ENCODE measurements at regions of chr2 and their contacts with region 1.

Region 1: GRCh38 chr2:241173570-241173969 is 14.9 kb upstream of the ANO7 start:
- DNase-seq: no peak
- H3K4me3 ChIP-seq: no peak overlapping the region
- H3K27ac ChIP-seq: no peak overlapping the region
- H3K4me1 ChIP-seq: no peaks in the 10 kb centered on the region
- H3K27me3 ChIP-seq: no peaks in the 10 kb centered on the region
- CTCF ChIP-seq: no peak

Region 2: DNA sequence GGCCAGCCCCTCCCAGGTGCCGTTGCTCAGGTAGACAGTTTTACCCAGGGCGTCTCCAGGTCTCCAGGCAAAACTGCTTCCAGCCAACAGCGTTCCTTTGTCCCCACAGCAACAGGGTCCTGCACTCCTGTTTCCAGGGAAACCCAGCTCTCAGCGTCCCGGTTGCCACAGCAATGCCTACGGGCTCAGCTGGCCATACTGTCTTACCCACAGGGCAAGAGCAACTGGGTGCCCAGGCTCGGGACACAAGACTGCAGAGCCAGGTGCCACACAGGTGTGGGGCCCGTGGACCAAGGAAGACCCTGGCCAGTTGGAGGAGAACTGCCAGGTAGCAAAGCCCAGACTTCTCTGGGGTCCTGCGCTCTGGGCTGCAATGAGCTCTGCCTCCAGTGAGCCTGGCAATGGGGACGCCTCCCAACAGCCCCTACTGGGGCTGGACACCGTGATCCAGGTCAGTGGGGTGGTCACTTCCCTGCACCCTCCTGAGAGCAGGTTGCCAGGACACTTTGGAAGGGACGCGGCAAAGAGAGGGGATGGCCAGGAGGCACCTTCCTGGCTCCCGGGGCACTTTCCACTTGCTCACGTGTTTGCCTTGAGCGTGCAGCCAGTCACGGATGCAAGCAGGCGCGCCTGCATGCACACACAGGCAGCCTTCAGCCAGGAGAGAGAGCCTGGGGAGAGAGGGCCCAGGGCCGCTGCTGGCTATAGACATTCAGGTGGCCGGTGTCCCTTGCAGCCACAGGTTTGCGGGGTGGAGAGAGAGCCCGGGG is 267.2 kb before region 1 on chr2 and contains the start of gene CROCC2:
- CTCF ChIA-PET with region 1: no interaction called
- POLR2A ChIA-PET with region 1: no interaction called
- intact Hi-C with region 1: no loop called
- DNase-seq: no peak
- H3K4me3 ChIP-seq: no peak within 1 kb of the TSS
- H3K27ac ChIP-seq: no peak within 1 kb of the TSS
- H3K4me1 ChIP-seq: peaks cover 15% of the 10 kb centered on the region
- H3K27me3 ChIP-seq: no peaks in the 10 kb centered on the region
- CTCF ChIP-seq: no peak
- total RNA-seq, gene CROCC2: not detected in 2 replicates

Region 3: GRCh38 chr2:241110607-241111439 is 62.7 kb before region 1 on chr2:
- CTCF ChIA-PET with region 1: no interaction called
- POLR2A ChIA-PET with region 1: no interaction called
- intact Hi-C with region 1: no loop called
- DNase-seq: no peak
- H3K4me3 ChIP-seq: no peak overlapping the region
- H3K27ac ChIP-seq: no peak overlapping the region
- H3K4me1 ChIP-seq: no peaks in the 10 kb centered on the region
- H3K27me3 ChIP-seq: no peaks in the 10 kb centered on the region
- CTCF ChIP-seq: no peak

Region 4: DNA sequence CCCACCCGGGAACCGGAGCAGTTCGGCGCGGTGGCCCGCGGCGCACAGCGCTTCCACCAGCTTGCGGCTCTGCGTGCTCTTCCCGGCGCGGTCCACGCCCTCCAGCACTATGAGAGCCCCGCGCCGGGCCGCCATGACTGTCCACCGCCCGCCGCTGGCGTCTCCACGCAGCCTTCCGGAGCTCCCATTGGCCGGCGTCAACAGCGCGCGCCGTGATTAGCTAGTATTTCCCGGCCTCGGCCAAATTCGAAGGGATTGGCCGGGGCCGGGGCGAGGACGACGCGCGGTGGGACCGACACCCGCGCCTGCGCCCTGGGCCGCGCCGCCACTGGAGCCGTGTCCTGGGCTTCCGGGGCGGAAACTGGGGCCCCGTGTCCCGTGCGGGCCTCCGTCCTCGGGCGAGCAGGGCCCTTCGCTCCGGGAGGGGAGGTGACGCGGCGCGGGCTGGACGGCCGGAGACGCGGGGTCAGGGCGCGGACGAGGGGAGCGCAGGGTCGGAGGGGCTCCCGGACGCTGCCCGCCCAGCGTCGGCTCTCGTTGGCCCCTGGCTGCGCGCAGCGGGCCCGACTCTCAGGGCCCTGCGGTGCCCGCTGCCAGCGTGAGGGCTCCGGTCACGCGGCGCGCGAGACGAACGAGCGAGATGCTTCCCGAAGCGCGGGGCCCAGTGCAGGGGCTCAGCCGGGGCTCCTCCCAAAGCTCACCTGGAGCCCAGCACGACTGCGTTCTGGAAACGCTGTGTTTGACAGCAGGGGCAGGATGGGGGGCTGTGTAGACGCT is 513.3 kb after region 1 on chr2 and contains the start of gene DTYMK:
- CTCF ChIA-PET with region 1: no interaction called
- POLR2A ChIA-PET with region 1: interaction called, 11 read pairs
- intact Hi-C with region 1: no loop called
- DNase-seq: peak; percentile 93 to 100
- H3K4me3 ChIP-seq: peak within 1 kb of the TSS; percentile 95
- H3K27ac ChIP-seq: peak within 1 kb of the TSS; percentile 72
- H3K4me1 ChIP-seq: peaks cover 13% of the 10 kb centered on the region
- H3K27me3 ChIP-seq: no peaks in the 10 kb centered on the region
- CTCF ChIP-seq: no peak
- total RNA-seq, gene DTYMK: 183 and 191 TPM in 2 replicates